Activated CD4-positive, alpha-beta T cell treated with anti-CD3 and anti-CD28 coated beads for 36 hours (primary cell): ENCODE measurements at regions of chr6 and their contacts with region 1.

Region 1: DNA sequence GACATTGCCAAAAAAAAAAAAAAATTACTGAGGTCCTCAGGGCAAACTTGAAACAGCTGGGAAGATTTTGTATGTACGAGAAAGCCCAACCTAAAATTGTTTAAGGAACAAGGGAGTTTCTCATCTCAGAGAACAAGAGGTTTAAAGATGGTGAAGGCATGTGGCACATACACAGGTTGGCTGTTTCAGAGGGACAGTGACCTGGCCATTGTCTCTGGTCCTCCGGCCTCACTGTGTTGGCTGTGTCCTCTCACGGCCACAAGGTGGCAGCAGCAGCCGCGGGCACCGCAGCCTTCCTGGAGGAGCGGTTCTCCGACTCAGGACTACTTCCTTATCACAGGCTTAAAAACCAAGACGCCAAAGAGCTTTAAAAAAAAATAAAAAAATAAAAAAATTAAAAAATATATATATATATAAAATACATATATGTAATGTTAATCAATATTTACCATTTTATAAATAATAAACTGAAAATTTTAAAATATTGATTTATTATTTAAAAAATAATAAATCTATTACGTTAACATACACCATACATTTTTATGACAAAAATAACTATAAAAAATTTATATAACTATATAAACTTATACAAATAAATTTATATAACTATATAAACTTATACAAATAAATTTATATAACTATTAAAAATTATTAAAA is 52.8 kb downstream of the GTF2H5 start:
- DNase-seq: peak; percentile 86
- ATAC-seq: peak; percentile 97
- H3K4me3 Mint-ChIP-seq: no peak overlapping the region
- H3K27ac Mint-ChIP-seq: no peak overlapping the region
- H3K4me1 Mint-ChIP-seq: peaks cover 4% of the 10 kb centered on the region
- H3K27me3 Mint-ChIP-seq: peaks cover 1% of the 10 kb centered on the region

Region 2: DNA sequence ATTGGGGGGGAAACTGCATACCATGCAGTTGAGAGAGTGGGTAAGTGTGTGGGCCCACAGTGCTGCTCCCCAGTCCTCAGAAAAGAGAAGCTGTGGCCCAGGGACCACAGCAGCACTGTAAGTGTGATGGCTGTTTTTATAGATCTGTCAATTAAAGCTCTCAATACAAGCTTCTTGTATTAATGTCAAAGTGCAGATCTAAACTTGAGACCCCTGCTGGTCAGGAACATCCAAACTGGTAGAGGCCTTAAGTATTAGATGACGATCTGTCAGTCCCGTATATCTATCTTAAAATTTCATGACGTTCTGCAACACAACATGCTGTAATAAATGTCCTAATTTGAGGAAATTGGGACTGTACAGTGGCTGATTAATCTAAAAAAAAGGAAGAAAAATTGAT is 166.1 kb after region 1 on chr6:
- CTCF ChIA-PET with region 1: interaction called, 16 read pairs
- POLR2A ChIA-PET with region 1: no interaction called
- intact Hi-C with region 1: loop called in 1 of 2 experiments (anchors 1 kb)
- DNase-seq: no peak
- ATAC-seq: no peak
- H3K4me3 Mint-ChIP-seq: no peak overlapping the region
- H3K27ac Mint-ChIP-seq: no peak overlapping the region
- H3K4me1 Mint-ChIP-seq: peaks cover 3% of the 10 kb centered on the region
- H3K27me3 Mint-ChIP-seq: no peaks in the 10 kb centered on the region

Region 3: DNA sequence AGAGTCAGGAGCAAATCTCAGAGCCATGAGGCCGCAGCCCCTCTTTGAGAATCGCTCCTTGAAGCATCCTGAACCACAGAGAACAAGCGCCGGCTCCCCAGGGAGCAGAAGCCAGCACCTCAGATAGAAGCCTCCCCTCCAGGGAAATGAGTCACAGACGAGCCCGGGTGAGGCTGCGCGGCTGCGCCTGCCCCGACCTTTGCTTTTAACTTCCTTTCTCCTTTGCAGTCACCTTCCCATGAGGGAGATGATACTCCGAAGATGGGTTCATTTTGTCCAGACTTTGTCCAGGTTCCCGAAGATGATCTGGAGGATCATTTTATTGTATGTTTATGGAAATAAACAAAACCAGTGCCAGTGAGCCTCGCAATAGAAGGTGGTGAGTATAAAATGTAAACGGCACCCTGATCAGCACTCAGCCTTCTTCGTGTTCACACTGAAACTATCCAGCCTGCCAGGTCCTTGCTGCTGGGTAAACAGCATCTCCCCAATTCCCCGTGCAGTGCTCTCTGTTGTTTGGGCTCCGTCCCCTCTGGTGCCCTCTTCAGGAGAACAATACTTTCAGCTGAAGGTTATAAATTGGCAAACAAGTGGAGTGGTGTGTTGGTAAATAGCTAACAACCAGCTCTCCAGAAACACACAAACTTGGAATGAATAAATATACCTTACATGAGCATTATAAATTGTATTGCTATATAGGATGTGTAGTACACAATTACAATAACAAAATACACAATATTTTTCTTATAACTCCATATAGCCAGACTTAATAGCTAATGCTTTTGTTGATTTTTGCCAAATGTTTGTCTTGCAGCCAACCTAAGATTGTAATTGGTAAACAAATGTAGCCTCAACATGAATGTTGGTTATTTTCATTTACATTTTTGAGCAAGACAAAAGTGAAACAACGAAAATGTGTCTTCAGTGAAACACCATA is 297.5 kb after region 1 on chr6:
- CTCF ChIA-PET with region 1: interaction called, 15 read pairs
- POLR2A ChIA-PET with region 1: no interaction called
- intact Hi-C with region 1: loop called (anchors 1 to 2 kb)
- DNase-seq: peak; percentile 77
- ATAC-seq: peak; percentile 94
- H3K4me3 Mint-ChIP-seq: peak overlapping the region; percentile 76
- H3K27ac Mint-ChIP-seq: peak overlapping the region; percentile 79
- H3K4me1 Mint-ChIP-seq: peaks cover 36% of the 10 kb centered on the region
- H3K27me3 Mint-ChIP-seq: peaks cover 13% of the 10 kb centered on the region

Region 4: GRCh38 chr6:158605266-158605878 is 384.5 kb after region 1 on chr6:
- CTCF ChIA-PET with region 1: interaction called, 12 read pairs
- POLR2A ChIA-PET with region 1: no interaction called
- intact Hi-C with region 1: loop called (anchors 1 to 2 kb)
- DNase-seq: peak; percentile 77
- ATAC-seq: peak; percentile 74
- H3K4me3 Mint-ChIP-seq: no peak overlapping the region
- H3K27ac Mint-ChIP-seq: no peak overlapping the region
- H3K4me1 Mint-ChIP-seq: no peaks in the 10 kb centered on the region
- H3K27me3 Mint-ChIP-seq: no peaks in the 10 kb centered on the region

Region 5: DNA sequence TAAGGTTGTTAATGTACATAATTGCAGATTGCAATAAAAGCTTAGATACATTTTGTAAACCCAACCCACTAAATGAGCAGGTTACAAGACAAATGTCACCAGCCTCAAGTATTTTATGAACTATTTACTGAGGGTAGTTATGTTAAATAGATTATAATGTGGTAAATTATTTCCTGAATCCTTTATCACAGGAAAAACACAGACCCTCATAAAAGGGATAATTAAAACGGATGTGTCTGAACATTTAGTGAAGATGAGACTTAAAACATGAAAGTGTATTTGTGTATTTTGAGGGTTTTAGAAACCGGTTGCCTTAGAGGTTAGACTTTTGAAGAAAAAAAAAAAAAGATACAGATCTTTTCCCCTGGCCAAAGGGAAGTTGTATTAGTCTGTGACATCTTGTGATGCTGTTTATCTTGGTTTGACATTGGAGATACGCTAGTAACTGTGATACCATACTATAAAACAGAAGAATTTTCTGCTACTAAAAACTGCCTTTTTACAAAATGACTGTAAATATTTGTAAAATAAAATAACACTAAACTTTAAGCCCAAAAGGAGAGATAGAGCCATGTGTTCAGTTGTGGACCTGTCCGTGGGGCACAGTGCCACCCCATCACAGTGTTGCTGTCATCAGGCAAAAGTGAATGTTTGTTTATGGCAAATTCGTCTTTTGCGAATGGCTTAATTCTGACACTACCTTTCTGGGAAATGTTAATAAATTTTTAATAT is 413.9 kb after region 1 on chr6:
- CTCF ChIA-PET with region 1: no interaction called
- POLR2A ChIA-PET with region 1: no interaction called
- intact Hi-C with region 1: no loop called
- DNase-seq: no peak
- ATAC-seq: no peak
- H3K4me3 Mint-ChIP-seq: no peak overlapping the region
- H3K27ac Mint-ChIP-seq: peak overlapping the region; percentile 72
- H3K4me1 Mint-ChIP-seq: peaks cover 70% of the 10 kb centered on the region
- H3K27me3 Mint-ChIP-seq: no peaks in the 10 kb centered on the region

Region 6: GRCh38 chr6:158649289-158650143 is 428.6 kb after region 1 on chr6 and contains the start of gene SYTL3:
- CTCF ChIA-PET with region 1: no interaction called
- POLR2A ChIA-PET with region 1: no interaction called
- intact Hi-C with region 1: no loop called
- DNase-seq: peak; percentile 93
- ATAC-seq: peak; percentile 62
- H3K4me3 Mint-ChIP-seq: peak within 1 kb of the TSS; percentile 81
- H3K27ac Mint-ChIP-seq: peak within 1 kb of the TSS; percentile 88
- H3K4me1 Mint-ChIP-seq: peaks cover 72% of the 10 kb centered on the region
- H3K27me3 Mint-ChIP-seq: no peaks in the 10 kb centered on the region
- total RNA-seq, gene SYTL3: 163 to 180 TPM